H1 (cell line): ENCODE measurements at regions of chr6 and their contacts with region 1.

Region 1: GRCh38 chr6:24720604-24721460 is 1.9 kb upstream of the C6orf62 start:
- DNase-seq: peak; percentile 97 to 99
- H3K4me3 ChIP-seq: peak overlapping the region; percentile 92 to 95 (median 92)
- H3K27ac ChIP-seq: peak overlapping the region; percentile 94
- H3K4me1 ChIP-seq: peaks cover 0 to 3% (median 0%) of the 10 kb centered on the region in 4 experiments; a peak in 1 of 7 replicates
- H3K27me3 ChIP-seq: no peaks in the 10 kb centered on the region
- CTCF ChIP-seq: no peak
- EP300 ChIP-seq: peak in 1 of 2 experiments; percentile 99; a peak in 2 of 3 replicates
- POLR2A ChIP-seq: peak; percentile 99
- RAD21 ChIP-seq: no peak

Region 2: DNA sequence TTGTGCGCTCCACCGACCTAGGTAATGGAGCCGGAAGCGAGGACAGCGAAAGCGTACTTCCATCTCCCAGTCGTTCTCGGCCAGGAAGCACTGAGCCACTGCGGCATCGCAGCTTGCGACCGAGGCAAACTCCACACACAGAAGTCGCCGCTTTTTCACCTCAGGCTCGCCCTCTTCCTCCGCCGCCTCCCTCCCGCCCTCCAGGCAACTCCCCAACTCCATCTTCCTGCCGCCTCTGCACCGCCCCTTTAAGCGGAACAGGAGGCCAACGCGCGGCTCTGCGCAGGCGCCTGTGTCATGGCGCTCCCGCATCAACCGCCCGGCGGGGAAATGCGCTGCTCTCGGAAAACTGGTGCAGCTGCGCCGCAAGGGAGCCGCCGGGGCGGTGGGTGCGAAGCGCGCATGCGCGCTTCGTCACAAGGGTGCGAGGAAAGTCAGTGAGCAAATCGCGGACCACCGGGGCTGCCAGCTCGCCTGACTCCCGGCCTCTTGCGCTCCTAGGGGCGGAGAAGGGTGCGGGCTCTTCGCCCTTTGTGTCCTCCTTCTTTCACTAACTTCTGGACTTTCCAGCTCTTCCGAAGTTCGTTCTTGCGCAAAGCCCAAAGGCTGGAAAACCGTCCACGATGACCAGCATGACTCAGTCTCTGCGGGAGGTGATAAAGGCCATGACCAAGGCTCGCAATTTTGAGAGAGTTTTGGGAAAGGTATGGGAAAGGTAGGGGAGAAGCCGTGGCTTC is 54.0 kb before region 1 on chr6 and contains the starts of genes ACOT13 and TDP2:
- CTCF ChIA-PET with region 1: no interaction called
- POLR2A ChIA-PET with region 1: interaction called, 13 read pairs
- DNase-seq: peak; percentile 93 to 97
- H3K4me3 ChIP-seq: peak within 1 kb of the TSS; percentile 85 to 99 (median 93)
- H3K27ac ChIP-seq: peak within 1 kb of the TSS; percentile 92
- H3K4me1 ChIP-seq: peaks cover 0 to 5% (median 0%) of the 10 kb centered on the region in 4 experiments; a peak in 3 of 7 replicates
- H3K27me3 ChIP-seq: no peaks in the 10 kb centered on the region
- CTCF ChIP-seq: peak; percentile 47 to 63 (median 58)
- EP300 ChIP-seq: peak in 1 of 2 experiments; percentile 57; a peak in 1 of 3 replicates
- POLR2A ChIP-seq: peak; percentile 86 to 94
- RAD21 ChIP-seq: peak; percentile 47 to 63
- total RNA-seq, gene ACOT13: 40.6 and 42.8 TPM in 2 replicates
- total RNA-seq, gene TDP2: 51.6 and 52.6 TPM in 2 replicates

Region 3: DNA sequence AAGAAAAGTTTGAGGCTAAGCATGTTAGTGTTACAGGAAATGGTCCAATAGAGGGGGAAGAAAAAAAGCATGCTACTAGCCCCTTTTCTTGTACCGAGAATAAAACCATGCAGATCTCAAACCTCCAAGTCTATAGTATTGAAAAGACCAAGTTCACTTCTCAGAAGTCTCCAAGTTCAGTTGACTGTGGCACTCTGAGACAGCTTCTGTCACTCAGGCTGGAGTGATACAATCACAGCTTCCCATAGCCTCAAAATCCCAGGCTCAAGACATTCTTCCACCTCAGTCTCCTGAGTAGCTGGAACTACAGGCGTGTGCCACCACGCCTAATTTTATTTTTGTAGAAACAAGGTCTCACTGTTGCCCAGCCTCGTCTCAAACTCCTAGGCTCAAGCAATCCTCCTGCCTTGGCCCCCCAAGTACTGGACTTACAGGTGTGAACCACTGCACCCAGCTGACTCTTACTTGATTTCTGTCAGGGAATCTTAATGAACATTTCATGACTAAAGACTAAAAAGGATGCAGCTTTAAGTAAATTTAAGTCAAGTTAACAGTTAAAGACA is 18.0 kb before region 1 on chr6:
- CTCF ChIA-PET with region 1: no interaction called
- POLR2A ChIA-PET with region 1: interaction called, 31 read pairs
- DNase-seq: no peak
- H3K4me3 ChIP-seq: no peak overlapping the region
- H3K27ac ChIP-seq: no peak overlapping the region
- H3K4me1 ChIP-seq: no peaks in the 10 kb centered on the region
- H3K27me3 ChIP-seq: no peaks in the 10 kb centered on the region
- CTCF ChIP-seq: no peak
- EP300 ChIP-seq: no peak
- POLR2A ChIP-seq: no peak
- RAD21 ChIP-seq: no peak

Region 4: GRCh38 chr6:24710519-24711303 is 10.1 kb before region 1 on chr6:
- CTCF ChIA-PET with region 1: no interaction called
- POLR2A ChIA-PET with region 1: interaction called, 19 read pairs
- DNase-seq: no peak
- H3K4me3 ChIP-seq: no peak overlapping the region
- H3K27ac ChIP-seq: no peak overlapping the region
- H3K4me1 ChIP-seq: no peaks in the 10 kb centered on the region
- H3K27me3 ChIP-seq: no peaks in the 10 kb centered on the region
- CTCF ChIP-seq: no peak
- EP300 ChIP-seq: no peak
- POLR2A ChIP-seq: no peak
- RAD21 ChIP-seq: no peak

Region 5: DNA sequence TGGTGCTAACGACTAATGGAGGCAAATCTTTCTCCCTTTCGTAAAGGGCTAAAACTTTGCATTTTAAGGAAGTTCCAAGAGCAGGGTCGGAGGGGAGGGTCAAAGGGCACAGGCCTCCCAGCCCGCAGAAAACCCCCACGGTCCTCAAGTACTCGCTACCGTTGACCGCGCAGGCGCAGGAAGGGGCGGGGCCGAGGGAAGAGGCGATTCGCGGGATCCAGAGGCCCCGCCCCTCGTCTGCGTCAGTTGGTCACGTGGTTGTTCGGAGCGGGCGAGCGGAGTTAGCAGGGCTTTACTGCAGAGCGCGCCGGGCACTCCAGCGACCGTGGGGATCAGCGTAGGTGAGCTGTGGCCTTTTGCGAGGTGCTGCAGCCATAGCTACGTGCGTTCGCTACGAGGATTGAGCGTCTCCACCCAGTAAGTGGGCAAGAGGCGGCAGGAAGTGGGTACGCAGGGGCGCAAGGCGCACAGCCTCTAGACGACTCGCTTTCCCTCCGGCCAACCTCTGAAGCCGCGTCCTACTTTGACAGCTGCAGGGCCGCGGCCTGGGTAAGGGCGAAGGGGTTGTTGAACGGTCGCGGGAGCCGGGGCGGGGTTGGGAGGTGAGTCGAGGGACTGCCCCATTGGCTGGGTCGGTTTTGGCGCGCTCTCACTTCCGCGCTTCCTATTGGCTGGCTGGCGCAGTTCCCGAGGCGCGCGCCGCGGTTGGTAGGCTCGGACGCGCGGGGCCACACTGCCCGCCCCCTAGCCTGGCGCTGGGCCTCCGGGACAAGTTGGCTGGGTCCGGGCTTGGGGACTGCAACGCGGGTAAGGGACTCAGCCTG is 54.1 kb after region 1 on chr6 and contains the start of gene GMNN:
- CTCF ChIA-PET with region 1: no interaction called
- POLR2A ChIA-PET with region 1: interaction called, 14 read pairs
- DNase-seq: peak; percentile 91 to 99
- H3K4me3 ChIP-seq: peak within 1 kb of the TSS; percentile 63 to 98 (median 85)
- H3K27ac ChIP-seq: peak within 1 kb of the TSS; percentile 99
- H3K4me1 ChIP-seq: peaks cover 0 to 7% (median 3%) of the 10 kb centered on the region in 4 experiments; a peak in 5 of 7 replicates
- H3K27me3 ChIP-seq: no peaks in the 10 kb centered on the region
- CTCF ChIP-seq: no peak
- EP300 ChIP-seq: peak in 1 of 2 experiments; percentile 67; a peak in 1 of 3 replicates
- POLR2A ChIP-seq: peak; percentile 87 to 89
- RAD21 ChIP-seq: no peak
- total RNA-seq, gene GMNN: 101 TPM in 2 replicates

Region 6: GRCh38 chr6:24902782-24903181 is 181.9 kb after region 1 on chr6:
- CTCF ChIA-PET with region 1: no interaction called
- POLR2A ChIA-PET with region 1: no interaction called
- DNase-seq: no peak
- H3K4me3 ChIP-seq: no peak overlapping the region
- H3K27ac ChIP-seq: no peak overlapping the region
- H3K4me1 ChIP-seq: peaks cover 4 to 6% (median 5%) of the 10 kb centered on the region in 4 experiments; a peak in 4 of 7 replicates
- H3K27me3 ChIP-seq: no peaks in the 10 kb centered on the region
- CTCF ChIP-seq: no peak
- EP300 ChIP-seq: no peak
- POLR2A ChIP-seq: no peak
- RAD21 ChIP-seq: no peak